MCF 10A (cell line): ENCODE measurements at regions of chr16 and their contacts with region 1.

Region 1: GRCh38 chr16:57802341-57803133 is at the start of gene KIFC3:
- DNase-seq: peak; percentile 67
- H3K4me3 Mint-ChIP-seq: peak within 1 kb of the TSS; percentile 76
- H3K27ac Mint-ChIP-seq: peak within 1 kb of the TSS; percentile 97
- H3K4me1 Mint-ChIP-seq: peaks cover 55% of the 10 kb centered on the region
- H3K27me3 Mint-ChIP-seq: no peaks in the 10 kb centered on the region
- CTCF ChIP-seq: peak; percentile 15
- total RNA-seq, gene KIFC3: 97.1 and 120 TPM in 2 replicates

Region 2: GRCh38 chr16:57653936-57654335 is 148.6 kb before region 1 on chr16:
- CTCF ChIA-PET with region 1: no interaction called
- POLR2A ChIA-PET with region 1: no interaction called
- intact Hi-C with region 1: no loop called
- DNase-seq: peak; percentile 72
- H3K4me3 Mint-ChIP-seq: no peak overlapping the region
- H3K27ac Mint-ChIP-seq: peak overlapping the region; percentile 69
- H3K4me1 Mint-ChIP-seq: peaks cover 6% of the 10 kb centered on the region
- H3K27me3 Mint-ChIP-seq: no peaks in the 10 kb centered on the region
- CTCF ChIP-seq: no peak

Region 3: DNA sequence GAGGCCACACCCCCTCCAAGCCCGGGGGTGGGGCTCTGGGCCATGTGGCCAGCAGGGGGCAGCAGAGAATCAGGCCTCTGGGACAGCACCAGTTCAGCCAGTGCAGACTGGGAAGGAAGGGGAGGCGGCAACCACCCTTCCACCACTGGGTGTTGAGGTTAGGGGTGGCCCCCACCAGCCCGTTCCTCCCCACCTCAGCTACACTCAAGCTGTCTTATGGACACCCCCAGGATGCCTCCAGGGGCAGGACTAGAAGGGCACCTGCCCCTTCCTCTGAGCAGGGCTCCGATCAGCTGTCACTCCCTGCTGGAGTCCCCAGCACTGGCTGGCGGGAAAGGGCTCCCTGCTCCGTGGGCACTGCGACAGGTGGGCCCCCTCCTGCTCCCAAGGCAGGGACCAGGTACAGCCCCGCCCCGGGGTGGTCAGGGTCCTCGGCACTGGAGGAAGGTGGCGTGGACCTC is 45.2 kb before region 1 on chr16:
- CTCF ChIA-PET with region 1: interaction called, 7 read pairs
- POLR2A ChIA-PET with region 1: no interaction called
- intact Hi-C with region 1: loop called (anchors 5 kb)
- DNase-seq: peak; percentile 85
- H3K4me3 Mint-ChIP-seq: no peak overlapping the region
- H3K27ac Mint-ChIP-seq: no peak overlapping the region
- H3K4me1 Mint-ChIP-seq: no peaks in the 10 kb centered on the region
- H3K27me3 Mint-ChIP-seq: no peaks in the 10 kb centered on the region
- CTCF ChIP-seq: peak; percentile 87

Region 4: GRCh38 chr16:57816334-57816745 is 13.8 kb after region 1 on chr16:
- CTCF ChIA-PET with region 1: interaction called, 4 read pairs
- POLR2A ChIA-PET with region 1: interaction called, 17 read pairs
- intact Hi-C with region 1: no loop called
- DNase-seq: peak; percentile 94
- H3K4me3 Mint-ChIP-seq: no peak overlapping the region
- H3K27ac Mint-ChIP-seq: peak overlapping the region; percentile 87
- H3K4me1 Mint-ChIP-seq: peaks cover 18% of the 10 kb centered on the region
- H3K27me3 Mint-ChIP-seq: no peaks in the 10 kb centered on the region
- CTCF ChIP-seq: no peak

Region 5: GRCh38 chr16:57834936-57835335 is 32.4 kb after region 1 on chr16:
- CTCF ChIA-PET with region 1: interaction called, 3 read pairs
- POLR2A ChIA-PET with region 1: interaction called, 4 read pairs
- intact Hi-C with region 1: loop called (anchors 2 kb)
- DNase-seq: peak; percentile 79
- H3K4me3 Mint-ChIP-seq: peak overlapping the region; percentile 25
- H3K27ac Mint-ChIP-seq: peak overlapping the region; percentile 75
- H3K4me1 Mint-ChIP-seq: peaks cover 8% of the 10 kb centered on the region
- H3K27me3 Mint-ChIP-seq: no peaks in the 10 kb centered on the region
- CTCF ChIP-seq: no peak